Activated CD4-positive, alpha-beta T cell treated with anti-CD3 and anti-CD28 coated beads for 36 hours (primary cell): ENCODE measurements at regions of chr9 and their contacts with region 1.

Region 1: DNA sequence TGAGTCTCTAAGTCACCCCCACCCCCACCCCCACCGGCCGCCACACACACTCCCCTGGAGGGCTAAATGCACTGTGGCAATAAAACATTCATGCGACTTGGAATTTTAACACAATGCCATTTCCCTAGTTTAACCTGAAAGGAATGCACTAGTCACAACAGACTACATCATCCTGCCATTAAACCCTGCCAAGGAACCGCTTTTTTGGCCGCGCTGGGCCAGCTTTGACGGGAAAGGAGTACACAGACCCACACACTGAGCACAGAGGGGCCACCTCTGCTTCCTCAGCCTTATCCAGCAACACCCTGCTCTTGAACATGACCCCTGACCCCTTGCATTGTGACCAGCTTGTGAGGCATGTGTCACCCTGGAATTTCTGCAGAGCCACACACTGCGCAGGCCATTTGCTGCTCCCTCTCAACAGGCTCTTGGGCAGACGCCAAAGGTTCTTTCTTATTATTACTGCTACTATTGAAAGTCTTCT is 165.3 kb downstream of the BNC2 start:
- DNase-seq: no peak
- ATAC-seq: no peak
- H3K4me3 Mint-ChIP-seq: no peak overlapping the region
- H3K27ac Mint-ChIP-seq: no peak overlapping the region
- H3K4me1 Mint-ChIP-seq: no peaks in the 10 kb centered on the region
- H3K27me3 Mint-ChIP-seq: no peaks in the 10 kb centered on the region

Region 2: GRCh38 chr9:16726718-16727451 is 21.7 kb after region 1 on chr9:
- CTCF ChIA-PET with region 1: no interaction called
- POLR2A ChIA-PET with region 1: no interaction called
- intact Hi-C with region 1: no loop called
- DNase-seq: peak; percentile 12
- ATAC-seq: peak; percentile 39
- H3K4me3 Mint-ChIP-seq: peak overlapping the region; percentile 17
- H3K27ac Mint-ChIP-seq: no peak overlapping the region
- H3K4me1 Mint-ChIP-seq: peaks cover 8% of the 10 kb centered on the region
- H3K27me3 Mint-ChIP-seq: peaks cover 33% of the 10 kb centered on the region

Region 3: GRCh38 chr9:16755467-16756160 is 50.5 kb after region 1 on chr9:
- CTCF ChIA-PET with region 1: no interaction called
- POLR2A ChIA-PET with region 1: no interaction called
- intact Hi-C with region 1: loop called in 1 of 2 experiments (anchors 5 kb)
- DNase-seq: no peak
- ATAC-seq: no peak
- H3K4me3 Mint-ChIP-seq: no peak overlapping the region
- H3K27ac Mint-ChIP-seq: no peak overlapping the region
- H3K4me1 Mint-ChIP-seq: no peaks in the 10 kb centered on the region
- H3K27me3 Mint-ChIP-seq: no peaks in the 10 kb centered on the region